ENCODE measurements at regions of chr7 and their contacts with region 1.

Region 1: GRCh38 chr7:48109848-48110663 is 21.0 kb downstream of the UPP1 start:
- DNase-seq: peak in 9 of 10 donors; percentile 70 to 89 (median 80)
- H3K4me3 ChIP-seq: no peak overlapping the region
- H3K27ac ChIP-seq: no peak overlapping the region
- H3K27me3 ChIP-seq: no peaks in the 10 kb centered on the region
- CTCF ChIP-seq: peak; percentile 87 to 100 (median 99)

Region 2: GRCh38 chr7:47945261-47946001 is 164.6 kb before region 1 on chr7:
- intact Hi-C with region 1: loop called (anchors 1 to 2 kb)
- DNase-seq: peak in 9 of 10 donors; percentile 67 to 88 (median 74)
- H3K4me3 ChIP-seq: no peak overlapping the region
- H3K27ac ChIP-seq: no peak overlapping the region
- H3K27me3 ChIP-seq: no peaks in the 10 kb centered on the region
- CTCF ChIP-seq: peak; percentile 73 to 94 (median 86)

Region 3: DNA sequence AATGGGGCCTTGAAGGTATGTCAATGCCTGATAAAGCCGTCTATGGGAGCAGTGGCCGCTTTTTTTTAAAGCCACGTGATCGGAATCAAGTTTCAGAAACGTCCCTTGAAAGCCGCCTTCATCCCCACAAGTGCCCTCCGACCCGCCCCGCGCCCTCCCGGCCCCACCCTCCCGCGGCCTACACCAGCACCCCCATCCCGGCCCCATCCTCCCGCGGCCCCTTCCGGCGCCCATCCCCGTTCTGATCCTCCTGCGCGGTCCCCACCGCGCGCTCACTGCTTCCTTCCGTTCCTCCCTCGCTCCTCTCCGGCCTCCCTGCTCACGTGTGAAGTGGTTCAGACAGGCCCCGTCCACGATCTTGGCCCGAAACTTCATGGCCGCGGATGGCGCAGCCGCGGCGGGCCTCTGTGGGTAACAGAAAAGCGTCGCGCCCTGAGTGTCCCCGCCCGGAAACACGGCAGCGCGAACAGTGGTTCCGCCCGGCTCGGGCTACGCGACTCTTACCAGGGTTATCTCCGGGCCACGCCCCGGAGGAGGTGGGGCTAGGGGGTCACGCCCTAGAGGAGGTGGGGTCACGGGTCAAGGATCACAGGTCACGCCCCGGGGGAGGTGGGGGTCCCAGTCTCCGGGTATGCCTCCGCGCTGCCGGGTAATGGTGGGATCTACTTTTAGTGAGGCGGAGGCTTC is 130.8 kb before region 1 on chr7 and contains the start of gene HUS1:
- intact Hi-C with region 1: loop called in 1 of 2 experiments (anchors 10 kb)
- DNase-seq: peak; percentile 79 to 93 (median 88)
- H3K4me3 ChIP-seq: peak within 1 kb of the TSS; percentile 56 to 92 (median 79)
- H3K27ac ChIP-seq: peak within 1 kb of the TSS in 57 of 59 donors; percentile 31 to 91 (median 72)
- H3K27me3 ChIP-seq: no peaks in the 10 kb centered on the region
- CTCF ChIP-seq: peak in 19 of 56 donors; percentile 7 to 55 (median 23)
- total RNA-seq, gene HUS1: 24.5 to 61.6 (median 38.5) TPM

Region 4: DNA sequence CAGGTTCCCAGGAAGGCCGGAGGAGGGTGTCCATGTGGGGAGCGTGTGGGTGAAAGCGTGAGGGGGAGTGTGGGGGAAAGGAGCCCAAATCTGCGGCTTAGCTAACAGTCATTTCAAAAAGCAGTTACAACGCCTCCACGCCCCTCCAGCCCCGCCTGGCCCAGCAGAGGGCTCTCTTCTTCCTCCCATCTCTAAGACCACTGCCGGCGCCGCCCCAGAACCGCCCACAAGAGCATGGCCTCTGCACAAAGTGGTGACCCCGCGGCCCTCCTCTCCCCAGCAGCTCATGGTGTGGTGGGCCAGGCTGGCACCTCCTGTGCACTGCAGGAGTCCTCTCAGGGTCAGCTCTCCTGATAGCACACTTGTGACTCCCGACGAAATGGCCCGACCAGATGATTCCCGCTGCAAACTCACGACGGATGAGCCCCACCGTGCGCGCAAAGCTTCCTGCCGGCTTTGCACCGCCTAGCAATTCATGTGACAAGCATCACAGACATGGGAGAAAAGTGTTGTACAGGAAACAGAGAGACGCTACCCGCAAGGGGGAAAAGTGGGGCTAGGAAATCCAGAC is 118.2 kb before region 1 on chr7:
- intact Hi-C with region 1: loop called (anchors 5 kb)
- DNase-seq: peak; percentile 31 to 74 (median 62)
- H3K4me3 ChIP-seq: peak overlapping the region; percentile 25 to 72 (median 55)
- H3K27ac ChIP-seq: peak overlapping the region in 18 of 59 donors; percentile 2 to 68 (median 31)
- H3K27me3 ChIP-seq: no peaks in the 10 kb centered on the region
- CTCF ChIP-seq: peak in 53 of 56 donors; percentile 15 to 72 (median 51)

Region 5: DNA sequence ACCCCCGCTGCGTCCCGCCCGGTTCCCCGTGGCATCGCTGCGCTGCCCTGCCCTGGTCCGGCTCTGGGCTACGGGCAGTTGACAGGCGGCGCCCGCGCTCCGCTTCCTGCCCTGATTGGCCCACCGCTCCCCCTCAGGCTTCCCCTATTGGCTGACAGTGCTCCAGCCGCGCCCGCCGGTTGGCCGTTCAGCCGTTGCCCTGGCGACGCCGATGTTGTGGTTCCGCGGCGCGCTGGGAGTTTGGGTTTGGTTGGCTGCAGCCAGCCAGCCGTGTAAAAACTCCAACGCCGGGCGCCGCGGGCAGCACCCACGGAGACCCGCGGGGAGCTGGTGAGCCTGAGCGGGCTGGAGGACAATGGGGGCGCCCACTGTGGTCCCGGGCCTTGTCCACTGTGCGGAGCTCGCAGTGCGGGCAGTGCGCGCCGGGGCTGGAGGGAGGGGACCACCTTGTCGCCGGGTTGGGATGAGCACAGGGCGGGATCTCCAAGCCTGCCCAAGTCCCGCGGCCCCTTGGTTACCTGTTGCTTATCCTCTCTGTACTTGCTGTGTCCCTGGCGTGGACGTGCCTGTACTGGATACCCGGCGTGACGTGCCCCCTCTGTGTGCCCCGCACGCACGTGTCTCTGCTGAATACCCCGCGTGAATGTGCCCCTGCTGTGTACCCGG is 74.6 kb before region 1 on chr7 and contains the start of gene C7orf57:
- intact Hi-C with region 1: loop called (anchors 2 to 5 kb)
- DNase-seq: peak; percentile 71 to 92 (median 84)
- H3K4me3 ChIP-seq: peak within 1 kb of the TSS; percentile 39 to 91 (median 69)
- H3K27ac ChIP-seq: no peak within 1 kb of the TSS
- H3K27me3 ChIP-seq: peaks cover 0 to 15% (median 0%) of the 10 kb centered on the region in 45 donors
- CTCF ChIP-seq: peak in 50 of 56 donors; percentile 8 to 64 (median 40)
- total RNA-seq, gene C7orf57: 0.20 to 1.7 (median 0.41) TPM in 19 of 120 experiments, not detected in the others